Mammary epithelial cell (primary cell): ENCODE measurements at regions of chr9 and their contacts with region 1.

Region 1: DNA sequence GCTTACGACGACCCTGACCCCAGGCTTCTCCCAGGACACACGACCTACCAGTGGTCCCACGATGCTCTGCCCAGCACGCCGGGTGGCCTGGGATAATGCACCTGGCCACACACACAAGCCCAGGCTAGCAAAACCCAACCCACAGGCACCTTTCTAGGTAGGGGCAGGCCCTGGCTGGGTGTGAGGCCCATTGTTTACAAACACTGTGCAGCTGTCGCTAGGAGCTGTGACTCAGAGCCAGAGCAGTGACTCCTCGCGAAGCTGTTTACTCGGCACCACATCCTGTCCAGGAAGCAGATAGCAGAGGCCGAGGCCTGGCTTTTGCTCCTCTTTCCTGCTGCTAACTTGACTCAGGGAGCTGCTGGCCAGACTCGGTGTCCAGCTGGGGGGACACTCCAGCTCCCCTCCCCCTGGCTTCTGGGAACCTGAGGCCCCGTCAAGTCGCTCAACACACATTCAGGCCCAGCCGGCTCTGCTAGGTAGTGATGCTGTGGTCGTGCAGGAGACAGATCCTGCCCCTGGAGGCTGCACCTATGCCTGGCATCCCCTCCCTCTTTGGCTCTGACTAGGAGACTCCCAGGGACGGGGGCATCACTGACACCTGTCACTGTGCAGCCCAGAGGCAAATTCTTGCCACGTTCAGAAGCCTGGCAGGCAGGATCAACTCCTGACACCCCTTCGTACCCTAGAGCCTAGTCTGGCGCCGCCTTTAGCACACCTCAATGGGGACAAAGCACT is 12.8 kb upstream of the RALGDS start:
- DNase-seq: peak; percentile 98
- H3K4me3 ChIP-seq: no peak overlapping the region
- H3K27ac ChIP-seq: peak overlapping the region; percentile 85
- H3K4me1 ChIP-seq: peaks cover 34% of the 10 kb centered on the region
- H3K27me3 ChIP-seq: no peaks in the 10 kb centered on the region
- CTCF ChIP-seq: no peak

Region 2: DNA sequence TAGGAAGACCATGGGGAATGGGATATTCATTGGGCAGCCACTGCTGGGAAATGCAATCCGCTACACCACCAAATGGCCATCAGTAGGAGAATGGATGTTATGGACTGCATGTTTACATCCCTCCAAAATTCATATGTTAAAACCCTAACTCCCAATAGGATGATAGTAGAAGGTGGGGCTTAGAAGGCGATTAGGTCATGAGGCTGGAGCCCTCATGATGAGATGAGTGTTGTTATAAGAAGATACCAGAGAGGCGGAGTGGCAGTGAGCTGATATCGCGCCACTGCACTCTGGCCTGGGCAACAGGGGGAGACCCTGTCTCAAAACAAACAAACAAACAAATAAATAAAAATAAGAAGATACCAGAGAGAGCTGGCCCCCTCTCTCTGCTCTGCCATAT is 119.2 kb before region 1 on chr9:
- CTCF ChIA-PET with region 1: no interaction called
- dilution Hi-C with region 1: no loop called
- in situ Hi-C with region 1: no loop called
- intact Hi-C with region 1: no loop called
- DNase-seq: no peak
- H3K4me3 ChIP-seq: no peak overlapping the region
- H3K27ac ChIP-seq: no peak overlapping the region
- H3K4me1 ChIP-seq: no peaks in the 10 kb centered on the region
- H3K27me3 ChIP-seq: no peaks in the 10 kb centered on the region
- CTCF ChIP-seq: no peak

Region 3: DNA sequence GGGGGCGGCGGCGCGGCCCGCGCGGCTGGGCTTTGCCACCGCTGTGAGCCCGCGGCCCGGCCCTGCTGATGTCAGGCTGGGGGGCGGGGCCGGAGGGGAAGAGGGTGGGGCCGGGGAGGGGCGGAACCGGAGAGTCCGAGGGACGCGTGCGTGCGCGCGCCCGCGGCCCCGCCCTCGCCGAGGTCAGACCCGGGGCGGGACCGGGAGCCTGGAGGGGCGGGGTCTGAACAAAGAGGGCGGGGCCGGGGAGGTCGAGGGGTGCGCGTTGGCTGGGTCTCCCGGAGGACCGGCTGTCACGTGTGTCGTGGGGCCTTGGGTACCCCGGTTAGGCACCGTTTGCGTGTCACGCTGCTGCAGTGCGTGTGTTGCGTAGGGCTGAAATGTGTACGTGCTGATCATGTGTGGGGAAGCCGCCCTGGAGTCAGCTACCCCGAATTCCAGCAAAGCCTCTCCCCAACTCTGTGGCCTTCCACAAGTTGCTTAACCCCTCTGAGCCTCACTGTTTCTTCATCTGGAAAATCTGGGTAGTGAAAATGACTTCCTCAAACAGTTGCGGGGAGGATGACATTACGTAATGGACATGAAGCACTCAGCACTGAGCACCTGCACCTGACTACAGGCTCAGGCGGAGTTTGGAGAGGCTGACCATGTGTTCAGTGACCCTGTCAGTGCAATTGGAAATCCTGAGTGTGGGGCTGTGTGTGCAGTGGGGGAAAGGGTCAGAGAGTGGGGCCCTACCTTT is 12.5 kb before region 1 on chr9 and contains the start of gene RALGDS:
- CTCF ChIA-PET with region 1: no interaction called
- dilution Hi-C with region 1: no loop called
- in situ Hi-C with region 1: no loop called
- intact Hi-C with region 1: loop called (anchors 1 kb)
- DNase-seq: peak; percentile 82
- H3K4me3 ChIP-seq: peak within 1 kb of the TSS; percentile 56 to 83 (median 62)
- H3K27ac ChIP-seq: peak within 1 kb of the TSS; percentile 37
- H3K4me1 ChIP-seq: peaks cover 11% of the 10 kb centered on the region
- H3K27me3 ChIP-seq: no peaks in the 10 kb centered on the region
- CTCF ChIP-seq: no peak
- total RNA-seq, gene RALGDS: 15.2 to 19.9 TPM

Region 4: GRCh38 chr9:133144137-133144903 is 10.5 kb after region 1 on chr9:
- CTCF ChIA-PET with region 1: interaction called, 8 read pairs
- dilution Hi-C with region 1: no loop called
- in situ Hi-C with region 1: no loop called
- intact Hi-C with region 1: loop called (anchors 1 kb)
- DNase-seq: peak; percentile 52
- H3K4me3 ChIP-seq: peak overlapping the region in 1 of 3 experiments; percentile 37
- H3K27ac ChIP-seq: no peak overlapping the region
- H3K4me1 ChIP-seq: peaks cover 23% of the 10 kb centered on the region
- H3K27me3 ChIP-seq: no peaks in the 10 kb centered on the region
- CTCF ChIP-seq: peak; percentile 76 to 96